ENCODE measurements at regions of chr2 and their contacts with region 1.

Region 1: DNA sequence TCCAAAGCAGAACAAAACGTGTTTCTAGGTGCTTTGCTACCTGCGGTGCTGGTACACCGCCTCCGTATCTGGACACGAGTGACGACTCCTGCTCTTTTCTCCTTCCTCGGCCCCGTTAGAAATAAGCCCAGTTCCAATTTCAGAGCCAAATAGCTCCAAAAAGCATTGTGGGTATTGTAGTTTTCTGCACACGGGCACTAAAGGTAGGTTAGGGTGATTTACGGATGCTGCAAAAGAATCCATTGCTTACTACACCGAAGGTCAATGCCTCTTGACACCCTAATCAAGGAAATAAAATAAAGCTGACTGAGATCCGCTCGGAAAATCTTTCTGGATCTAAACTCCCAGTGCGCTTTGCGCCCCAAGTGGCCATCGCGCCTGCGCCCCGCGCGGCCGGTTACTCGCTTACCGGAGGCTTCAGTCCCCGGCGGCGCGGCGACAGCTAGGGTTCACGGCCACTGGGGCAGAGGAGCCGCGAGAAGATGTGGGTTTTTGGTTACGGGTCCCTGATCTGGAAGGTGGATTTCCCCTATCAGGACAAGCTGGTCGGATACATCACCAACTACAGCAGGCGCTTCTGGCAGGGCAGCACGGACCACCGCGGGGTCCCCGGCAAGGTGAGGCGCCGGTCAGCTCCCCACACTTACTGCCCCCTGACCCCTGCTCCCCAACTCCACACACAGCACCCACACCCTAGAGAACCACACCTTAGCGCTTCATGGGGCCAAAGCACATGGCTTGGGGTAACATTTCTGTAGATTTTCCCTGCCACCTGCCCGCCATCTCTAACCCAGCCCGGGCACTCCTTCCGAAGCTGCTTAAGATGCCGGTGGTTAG is at the start of gene CHAC2:
- DNase-seq: peak; percentile 45 to 92
- H3K4me3 ChIP-seq: peak within 1 kb of the TSS; percentile 77 to 96
- H3K27ac ChIP-seq: peak within 1 kb of the TSS; percentile 78 to 80
- H3K4me1 ChIP-seq: peaks cover 0 to 3% of the 10 kb centered on the region in 2 donors
- H3K27me3 ChIP-seq: no peaks in the 10 kb centered on the region
- CTCF ChIP-seq: peak in 2 of 3 experiments; percentile 38 to 57
- total RNA-seq, gene CHAC2: not detected

Region 2: DNA sequence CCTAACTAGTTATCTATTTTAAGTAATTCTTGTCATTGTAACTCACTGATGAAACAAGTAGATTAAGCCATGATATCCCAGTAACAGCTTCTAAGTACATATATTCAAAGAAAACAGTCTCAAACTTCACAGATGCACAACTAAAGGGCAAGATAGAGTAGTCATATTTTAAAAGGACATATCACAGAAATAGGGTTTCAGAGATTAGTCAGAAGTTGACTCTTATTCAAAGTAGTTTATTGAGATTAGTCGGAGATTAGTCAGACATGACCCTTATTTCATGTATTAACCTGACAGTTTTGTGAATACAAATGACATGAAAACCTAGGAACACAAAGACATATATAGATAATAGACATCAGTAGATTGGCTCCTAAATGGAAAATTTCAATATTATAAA is 15.9 kb before region 1 on chr2:
- intact Hi-C with region 1: no loop called
- DNase-seq: no peak
- H3K4me3 ChIP-seq: no peak overlapping the region
- H3K27ac ChIP-seq: no peak overlapping the region
- H3K4me1 ChIP-seq: peaks cover 0 to 9% of the 10 kb centered on the region in 2 donors
- H3K27me3 ChIP-seq: no peaks in the 10 kb centered on the region
- CTCF ChIP-seq: no peak

Region 3: GRCh38 chr2:53786705-53787612 is 19.3 kb after region 1 on chr2 and contains the starts of genes ASB3 and ERLEC1:
- intact Hi-C with region 1: loop called (anchors 1 kb)
- DNase-seq: peak; percentile 49 to 92
- H3K4me3 ChIP-seq: peak within 1 kb of the TSS; percentile 69 to 83
- H3K27ac ChIP-seq: peak within 1 kb of the TSS; percentile 79 to 87
- H3K4me1 ChIP-seq: peaks cover 0 to 15% of the 10 kb centered on the region in 2 donors
- H3K27me3 ChIP-seq: no peaks in the 10 kb centered on the region
- CTCF ChIP-seq: peak in 1 of 3 experiments; percentile 36
- total RNA-seq, gene ASB3: 3.4 TPM
- total RNA-seq, gene ERLEC1: 150 TPM

Region 4: GRCh38 chr2:53813151-53813550 is 45.5 kb after region 1 on chr2:
- intact Hi-C with region 1: no loop called
- DNase-seq: no peak
- H3K4me3 ChIP-seq: no peak overlapping the region
- H3K27ac ChIP-seq: no peak overlapping the region
- H3K4me1 ChIP-seq: no peaks in the 10 kb centered on the region
- H3K27me3 ChIP-seq: no peaks in the 10 kb centered on the region
- CTCF ChIP-seq: no peak

Measured in ascending aorta (tissue), 2 donors.